Heart left ventricle (tissue), 16 donors: ENCODE measurements at regions of chr11 and their contacts with region 1.

Region 1: DNA sequence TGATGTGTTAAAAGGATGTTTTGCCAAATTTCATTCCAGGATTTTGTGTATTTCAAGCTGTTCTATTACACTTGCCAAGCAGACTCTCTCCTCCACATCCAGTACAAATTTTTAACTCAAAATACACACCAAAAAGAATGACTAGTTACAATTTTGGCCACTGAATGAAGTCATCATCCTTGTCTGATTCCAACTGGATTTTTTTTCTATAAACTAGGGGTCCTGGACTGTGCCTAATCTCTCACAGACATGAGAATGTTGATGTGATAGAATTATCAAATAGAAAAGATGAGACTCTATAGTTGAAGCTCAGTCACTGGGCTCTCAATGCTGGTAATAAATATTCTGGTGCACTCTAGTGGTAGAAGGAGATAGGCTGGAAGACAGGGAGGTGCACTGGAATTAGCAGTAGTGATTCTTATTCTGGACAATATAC is 85.8 kb downstream of the FANCF start:
- DNase-seq: no peak
- ATAC-seq: no peak
- H3K4me3 ChIP-seq: no peak overlapping the region
- H3K27ac ChIP-seq: no peak overlapping the region
- H3K4me1 ChIP-seq: no peaks in the 10 kb centered on the region
- H3K27me3 ChIP-seq: peaks cover 0 to 4% (median 0%) of the 10 kb centered on the region in 9 donors
- CTCF ChIP-seq: peak in 11 of 12 donors; percentile 15 to 54 (median 39)
- POLR2A ChIP-seq: no peak

Region 2: DNA sequence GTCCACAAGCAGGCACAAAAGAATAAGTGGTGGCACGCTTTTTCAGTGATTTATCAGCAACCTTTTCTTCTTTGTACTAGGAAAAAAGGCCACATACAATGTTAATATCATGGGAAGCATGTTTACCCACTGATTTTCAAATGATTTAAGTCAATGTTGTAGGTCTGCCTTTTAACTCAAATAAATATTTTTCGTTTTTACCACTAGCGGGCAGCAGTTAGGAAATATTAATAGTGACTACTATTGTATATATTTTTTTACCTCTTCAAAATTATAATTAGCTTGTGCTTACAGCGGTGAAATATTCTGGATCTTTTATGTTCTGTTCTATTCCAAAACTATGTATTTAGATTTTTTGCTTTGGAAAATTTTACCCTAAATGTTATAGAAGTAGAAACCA is 208.1 kb before region 1 on chr11:
- intact Hi-C with region 1: loop called (anchors 2 to 10 kb)
- DNase-seq: no peak
- ATAC-seq: no peak
- H3K4me3 ChIP-seq: no peak overlapping the region
- H3K27ac ChIP-seq: no peak overlapping the region
- H3K4me1 ChIP-seq: no peaks in the 10 kb centered on the region
- H3K27me3 ChIP-seq: peaks cover 0 to 19% (median 2%) of the 10 kb centered on the region in 9 donors
- CTCF ChIP-seq: peak in 1 of 12 donors; percentile 10
- POLR2A ChIP-seq: no peak

Region 3: DNA sequence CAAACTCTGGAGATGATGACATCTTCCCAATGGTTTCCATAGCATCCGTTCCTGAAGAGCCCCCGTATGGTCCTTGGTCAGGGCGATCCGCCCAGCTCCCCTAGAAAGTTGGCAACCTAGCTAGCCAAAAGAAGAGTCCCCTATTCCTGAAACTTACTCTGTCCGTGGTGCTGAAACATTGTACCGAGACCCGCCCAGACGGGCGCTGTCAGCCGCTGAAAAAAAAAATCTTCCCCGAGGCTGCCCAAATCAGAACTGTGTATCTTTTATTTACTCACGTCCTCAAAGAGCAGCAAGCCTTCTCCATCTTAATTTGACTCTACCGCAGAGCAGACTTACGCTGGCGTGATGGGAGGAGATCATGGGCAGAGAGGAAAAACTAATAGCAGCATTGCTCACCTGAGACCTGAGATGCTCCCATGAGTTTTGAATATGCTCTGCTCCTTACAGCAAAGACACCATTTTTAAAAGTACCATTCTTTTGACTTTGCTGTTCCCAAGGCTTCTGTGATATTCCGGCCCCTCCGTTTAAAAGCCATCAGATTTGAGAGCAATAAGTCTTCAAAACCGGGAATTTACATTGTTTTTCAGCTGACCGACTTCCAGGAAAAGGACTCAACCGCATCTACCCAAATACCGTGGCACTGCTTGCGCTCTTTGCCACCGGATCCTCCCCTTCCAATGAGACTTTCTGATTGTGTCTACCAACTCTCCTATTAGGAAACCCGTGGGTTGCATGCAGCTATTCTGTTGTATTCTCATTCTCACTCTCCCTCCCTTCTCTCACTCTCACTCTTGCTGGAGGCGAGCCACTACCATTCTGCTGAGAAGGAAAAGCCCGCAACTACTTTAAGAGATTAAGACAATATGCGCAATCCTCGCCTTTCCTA is 202.0 kb before region 1 on chr11 and contains the start of gene SLC17A6:
- intact Hi-C with region 1: loop called (anchors 2 to 10 kb)
- DNase-seq: no peak
- ATAC-seq: peak in 1 of 4 donors; percentile 42
- H3K4me3 ChIP-seq: no peak within 1 kb of the TSS
- H3K27ac ChIP-seq: no peak within 1 kb of the TSS
- H3K4me1 ChIP-seq: peaks cover 0 to 11% (median 0%) of the 10 kb centered on the region in 12 donors
- H3K27me3 ChIP-seq: peaks cover 15 to 66% (median 57%) of the 10 kb centered on the region in 9 donors
- CTCF ChIP-seq: no peak
- POLR2A ChIP-seq: no peak
- total RNA-seq, gene SLC17A6: not detected

Region 4: GRCh38 chr11:22392561-22392960 is 147.3 kb before region 1 on chr11:
- intact Hi-C with region 1: no loop called
- DNase-seq: no peak
- ATAC-seq: no peak
- H3K4me3 ChIP-seq: no peak overlapping the region
- H3K27ac ChIP-seq: no peak overlapping the region
- H3K4me1 ChIP-seq: peaks cover 0 to 2% (median 0%) of the 10 kb centered on the region in 12 donors
- H3K27me3 ChIP-seq: no peaks in the 10 kb centered on the region
- CTCF ChIP-seq: no peak
- POLR2A ChIP-seq: no peak